Sciatic nerve (tissue), 2 donors: ENCODE measurements at regions of chr11 and their contacts with region 1.

Region 1: GRCh38 chr11:118596224-118597146 is 10.9 kb upstream of the PHLDB1 start:
- DNase-seq: peak; percentile 49
- ATAC-seq: no peak

Region 2: GRCh38 chr11:118659314-118659952 is 62.9 kb after region 1 on chr11:
- intact Hi-C with region 1: loop called (anchors 5 kb)
- DNase-seq: peak; percentile 96
- ATAC-seq: peak; percentile 85